ENCODE measurements at regions of chr16 and their contacts with region 1.

Region 1: GRCh38 chr16:48164907-48165726 is 9.3 kb upstream of the ABCC12 start:
- DNase-seq: peak; percentile 77 to 82
- ATAC-seq: peak; percentile 91 to 98 (median 96)
- H3K4me3 ChIP-seq: no peak overlapping the region
- H3K27ac ChIP-seq: no peak overlapping the region
- H3K4me1 ChIP-seq: peaks cover 0 to 26% (median 7%) of the 10 kb centered on the region in 9 donors
- H3K27me3 ChIP-seq: no peaks in the 10 kb centered on the region
- CTCF ChIP-seq: peak; percentile 73 to 93 (median 87)

Region 2: GRCh38 chr16:46673320-46674013 is 1491.7 kb before region 1 on chr16:
- intact Hi-C with region 1: loop called in 1 of 10 experiments (anchors 10 kb)
- DNase-seq: peak in 1 of 2 donors; percentile 41
- ATAC-seq: peak; percentile 73 to 94 (median 91)
- H3K4me3 ChIP-seq: no peak overlapping the region
- H3K27ac ChIP-seq: no peak overlapping the region
- H3K4me1 ChIP-seq: no peaks in the 10 kb centered on the region
- H3K27me3 ChIP-seq: no peaks in the 10 kb centered on the region
- CTCF ChIP-seq: peak; percentile 72 to 95 (median 90)

Region 3: DNA sequence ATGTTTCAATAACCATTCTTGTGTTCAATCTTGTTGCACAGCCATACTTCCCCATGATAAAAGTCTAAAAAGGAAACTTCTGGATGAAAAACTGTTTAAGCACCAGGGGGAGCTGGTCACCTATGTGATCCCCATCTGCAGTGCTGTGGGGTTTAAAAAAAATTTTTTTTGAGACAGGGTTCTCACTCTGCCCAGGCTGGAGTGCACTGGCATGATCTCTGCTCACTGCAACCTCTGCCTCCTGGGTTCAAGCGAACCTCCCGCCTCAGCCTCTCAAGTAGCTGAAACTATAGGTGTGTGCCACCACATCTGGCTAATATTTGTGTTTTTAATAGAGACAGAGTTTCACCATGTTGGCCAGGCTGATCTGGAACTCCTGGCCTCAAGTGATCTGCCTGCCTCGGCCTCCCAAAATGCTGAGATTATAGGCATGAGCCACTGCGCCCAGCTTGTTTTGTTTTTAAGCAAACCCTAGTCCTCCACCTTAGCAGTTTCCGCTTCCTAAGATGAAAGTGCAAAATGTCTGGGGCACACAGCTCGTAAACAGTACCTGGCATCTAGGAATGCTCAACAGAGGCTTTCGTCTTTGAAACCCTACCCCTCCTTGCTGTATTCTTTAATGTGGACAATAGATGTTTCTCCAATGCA is 1217.1 kb before region 1 on chr16:
- intact Hi-C with region 1: loop called in 4 of 10 experiments (anchors 10 kb)
- DNase-seq: no peak
- ATAC-seq: peak in 3 of 8 donors; percentile 16 to 40 (median 33)
- H3K4me3 ChIP-seq: no peak overlapping the region
- H3K27ac ChIP-seq: no peak overlapping the region
- H3K4me1 ChIP-seq: no peaks in the 10 kb centered on the region
- H3K27me3 ChIP-seq: no peaks in the 10 kb centered on the region
- CTCF ChIP-seq: peak in 8 of 9 donors; percentile 16 to 57 (median 48)

Region 4: DNA sequence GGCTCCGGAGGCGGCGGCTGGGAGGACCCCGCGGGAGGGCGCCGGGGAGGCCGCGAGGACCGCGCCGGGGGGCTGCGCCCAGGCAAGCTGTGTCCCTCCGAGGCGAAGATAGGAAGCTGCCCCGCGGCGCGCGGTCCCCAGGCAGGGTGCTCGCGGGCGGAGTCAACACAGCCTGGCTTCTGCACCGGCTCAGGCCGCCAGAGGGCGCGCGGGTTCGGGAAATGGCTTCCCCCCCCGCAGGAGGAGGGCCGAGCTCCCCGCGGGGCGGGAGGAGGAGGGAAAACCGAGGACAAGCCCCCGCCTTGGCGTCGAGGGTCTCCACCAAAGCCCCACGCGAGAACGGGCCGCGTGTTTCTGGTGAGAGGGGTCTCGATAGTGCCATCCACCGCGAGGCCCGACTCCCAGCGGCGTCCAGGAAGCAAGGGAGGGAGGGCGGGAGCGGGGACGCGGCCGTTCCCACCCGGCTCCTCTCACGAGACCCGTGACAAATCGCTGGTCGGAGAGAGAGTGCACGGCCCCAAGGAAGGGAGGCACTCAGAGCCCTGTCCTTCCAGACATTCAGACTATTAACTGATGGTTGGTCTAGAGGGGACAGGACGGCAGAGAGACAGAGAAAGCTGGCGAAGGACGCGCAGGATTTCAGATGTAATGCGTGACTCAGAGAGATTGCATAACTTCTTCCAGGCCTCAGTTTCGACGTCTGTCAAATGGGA is 1127.2 kb before region 1 on chr16:
- intact Hi-C with region 1: loop called in 9 of 10 experiments (anchors 2 to 10 kb)
- DNase-seq: peak; percentile 89 to 94
- ATAC-seq: peak; percentile 96 to 99 (median 98)
- H3K4me3 ChIP-seq: peak overlapping the region; percentile 41 to 77 (median 66)
- H3K27ac ChIP-seq: peak overlapping the region in 7 of 10 donors; percentile 8 to 81 (median 57)
- H3K4me1 ChIP-seq: peaks cover 0 to 13% (median 4%) of the 10 kb centered on the region in 9 donors
- H3K27me3 ChIP-seq: peaks cover 0 to 7% (median 0%) of the 10 kb centered on the region in 7 donors
- CTCF ChIP-seq: peak; percentile 77 to 98 (median 93)

Region 5: DNA sequence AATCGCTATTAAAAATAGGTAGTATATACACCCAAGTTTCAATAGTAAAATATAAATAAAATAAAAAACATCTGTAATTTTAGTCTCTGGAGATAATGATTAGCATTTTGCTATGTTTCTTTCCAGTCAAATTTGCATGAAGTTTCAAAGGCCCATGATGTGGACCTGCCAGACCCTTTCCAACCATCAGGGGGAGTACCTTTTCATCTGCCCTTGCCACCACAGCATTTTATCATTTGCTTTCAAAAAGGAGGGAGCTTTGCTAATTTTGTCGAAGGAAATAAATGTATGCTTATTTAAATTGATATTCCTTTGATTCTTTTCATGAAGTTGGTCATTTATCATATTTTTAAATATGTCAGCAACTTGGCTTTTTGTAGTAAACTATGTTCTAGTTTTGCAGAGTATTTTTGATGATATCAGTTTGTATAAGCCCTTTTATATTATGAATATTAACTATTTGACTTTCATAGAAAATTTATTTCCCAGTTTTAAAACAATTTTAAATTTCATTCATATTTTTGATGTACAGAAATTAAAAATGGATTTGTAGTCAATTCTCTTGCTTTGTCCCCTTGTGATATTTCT is 906.1 kb before region 1 on chr16:
- intact Hi-C with region 1: loop called in 3 of 10 experiments (anchors 5 to 10 kb)
- DNase-seq: no peak
- ATAC-seq: no peak
- H3K4me3 ChIP-seq: no peak overlapping the region
- H3K27ac ChIP-seq: no peak overlapping the region
- H3K4me1 ChIP-seq: no peaks in the 10 kb centered on the region
- H3K27me3 ChIP-seq: no peaks in the 10 kb centered on the region
- CTCF ChIP-seq: peak; percentile 23 to 74 (median 62)

Region 6: DNA sequence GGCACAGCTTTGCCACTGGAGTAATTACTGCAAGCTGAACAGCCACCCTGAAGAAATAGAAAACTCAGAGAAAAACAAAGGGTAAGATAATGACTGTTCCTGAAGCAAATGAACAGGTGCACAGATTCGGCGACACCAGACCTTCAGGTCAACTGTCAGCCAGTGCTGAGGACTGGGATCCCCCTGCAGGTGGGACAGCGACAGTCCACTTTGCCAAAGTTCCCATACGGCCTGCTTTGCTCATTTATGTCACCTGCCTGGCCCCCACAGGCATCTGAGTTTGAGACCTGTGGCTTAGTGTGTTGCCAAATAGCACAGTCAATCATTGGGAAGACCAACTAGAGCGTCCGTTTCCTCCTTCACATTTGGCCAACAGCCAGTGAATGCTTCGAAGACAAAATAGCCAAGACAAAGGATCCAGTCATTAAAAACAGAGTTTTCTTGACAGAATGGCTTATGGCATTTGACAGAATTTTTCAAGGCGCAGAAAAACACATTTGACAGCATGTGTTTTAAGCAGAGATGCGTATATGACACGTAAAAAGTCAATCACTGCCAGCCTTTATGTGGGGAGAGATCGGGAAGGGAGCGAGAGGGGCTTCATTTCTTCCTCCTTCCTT is 123.1 kb before region 1 on chr16:
- intact Hi-C with region 1: no loop called
- DNase-seq: no peak
- ATAC-seq: no peak
- H3K4me3 ChIP-seq: no peak overlapping the region
- H3K27ac ChIP-seq: no peak overlapping the region
- H3K4me1 ChIP-seq: no peaks in the 10 kb centered on the region
- H3K27me3 ChIP-seq: peaks cover 0 to 8% (median 5%) of the 10 kb centered on the region in 7 donors
- CTCF ChIP-seq: no peak

Region 7: GRCh38 chr16:48231727-48232492 is 66.8 kb after region 1 on chr16:
- intact Hi-C with region 1: no loop called
- DNase-seq: peak in 1 of 2 donors; percentile 10
- ATAC-seq: peak in 5 of 8 donors; percentile 28 to 61 (median 41)
- H3K4me3 ChIP-seq: no peak overlapping the region
- H3K27ac ChIP-seq: no peak overlapping the region
- H3K4me1 ChIP-seq: peaks cover 0 to 8% (median 0%) of the 10 kb centered on the region in 9 donors
- H3K27me3 ChIP-seq: no peaks in the 10 kb centered on the region
- CTCF ChIP-seq: peak in 7 of 9 donors; percentile 27 to 53 (median 36)

Measured in heart right ventricle (tissue), 16 donors.